ENCODE measurements at regions of chr3 and their contacts with region 1.

Region 1: GRCh38 chr3:56801662-56802377 is at the start of gene ARHGEF3:
- DNase-seq: peak; percentile 73 to 94 (median 89)
- H3K4me3 ChIP-seq: peak within 1 kb of the TSS; percentile 61 to 97 (median 88)
- H3K27ac ChIP-seq: peak within 1 kb of the TSS in 57 of 59 donors; percentile 7 to 97 (median 89)
- H3K27me3 ChIP-seq: no peaks in the 10 kb centered on the region
- CTCF ChIP-seq: peak in 54 of 56 donors; percentile 14 to 71 (median 44)
- total RNA-seq, gene ARHGEF3: 20.5 to 88.5 (median 62.5) TPM

Region 2: DNA sequence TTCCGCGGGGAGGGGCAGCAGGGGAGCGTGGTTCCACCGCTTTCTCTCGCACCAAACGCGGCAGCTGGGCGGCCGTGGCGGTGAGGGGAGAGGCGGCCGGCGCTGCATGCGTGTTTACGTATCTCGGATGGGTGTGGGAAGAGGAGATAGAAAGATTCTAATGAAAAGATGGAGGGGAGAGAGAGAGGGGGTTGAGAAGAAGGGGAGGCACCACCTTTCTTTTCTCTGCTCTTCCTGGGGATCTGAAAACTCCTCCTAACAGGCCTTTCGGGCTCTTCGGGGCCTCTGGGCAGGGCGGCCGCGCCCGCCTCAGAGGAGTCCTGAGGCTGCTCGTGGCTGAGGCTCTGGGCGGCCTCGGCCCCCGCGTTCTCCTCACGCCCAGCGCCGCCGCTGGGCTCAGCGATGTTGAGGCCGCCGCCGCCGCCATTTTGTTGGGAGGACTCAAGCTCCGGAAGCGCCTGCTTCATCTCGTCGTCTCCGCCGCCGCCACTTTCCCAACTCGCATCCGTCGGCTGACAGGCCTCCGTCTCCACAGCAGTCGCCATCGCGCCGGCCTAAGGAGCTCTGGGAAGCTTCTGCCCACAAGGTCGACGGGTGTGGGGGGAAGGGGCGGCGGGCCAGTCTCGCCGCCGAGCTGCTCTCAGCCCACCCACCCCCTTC is 119.2 kb before region 1 on chr3:
- intact Hi-C with region 1: loop called (anchors 5 kb)
- DNase-seq: peak; percentile 41 to 85 (median 70)
- H3K4me3 ChIP-seq: peak overlapping the region; percentile 71 to 97 (median 88)
- H3K27ac ChIP-seq: peak overlapping the region; percentile 76 to 100 (median 98)
- H3K27me3 ChIP-seq: no peaks in the 10 kb centered on the region
- CTCF ChIP-seq: peak in 1 of 56 donors; percentile 2

Region 3: DNA sequence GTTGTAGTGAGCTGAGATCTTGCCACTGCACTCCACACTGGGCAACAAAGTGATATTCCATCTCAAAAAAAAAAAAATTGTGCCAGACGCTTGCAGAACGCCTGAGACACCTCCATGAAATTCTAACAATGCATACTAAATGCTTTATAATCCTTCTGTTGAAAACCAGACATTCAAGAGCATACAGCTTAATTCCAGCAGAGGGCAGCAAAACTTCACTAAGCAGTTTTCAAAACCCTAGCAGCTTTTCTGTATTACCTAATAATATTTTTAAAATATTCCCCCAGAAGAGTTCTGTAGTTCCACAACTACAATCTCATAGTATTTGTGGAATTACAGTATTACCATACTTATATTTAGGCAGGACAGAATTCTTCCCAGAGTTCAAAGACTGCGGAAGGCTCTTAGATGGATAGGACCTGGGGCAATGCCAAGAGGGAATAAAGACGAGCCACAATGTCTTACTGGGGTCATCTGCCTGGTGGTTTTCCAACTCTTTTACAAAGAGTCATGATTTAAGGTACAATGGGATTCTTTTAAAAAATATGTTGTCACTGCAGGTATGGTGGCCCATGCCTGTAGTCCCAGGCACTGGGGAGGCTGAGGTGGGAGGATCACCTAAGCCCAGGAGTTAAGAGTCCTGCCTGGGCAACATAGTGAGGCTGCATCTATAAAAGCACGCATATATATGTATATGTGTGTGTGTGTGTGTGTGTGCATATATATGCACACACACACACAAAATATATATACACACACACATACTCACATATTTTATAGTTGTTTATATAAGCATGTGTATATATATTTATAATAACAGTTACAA is 99.1 kb before region 1 on chr3:
- intact Hi-C with region 1: loop called (anchors 2 to 5 kb)
- DNase-seq: peak in 2 of 10 donors; percentile 52 to 53
- H3K4me3 ChIP-seq: peak overlapping the region in 10 of 59 donors; percentile 7 to 35 (median 27)
- H3K27ac ChIP-seq: no peak overlapping the region
- H3K27me3 ChIP-seq: no peaks in the 10 kb centered on the region
- CTCF ChIP-seq: peak; percentile 76 to 100 (median 94)

Region 4: GRCh38 chr3:56862352-56863074 is 60.7 kb after region 1 on chr3:
- intact Hi-C with region 1: loop called in 1 of 2 experiments (anchors 5 kb)
- DNase-seq: peak in 9 of 10 donors; percentile 30 to 72 (median 64)
- H3K4me3 ChIP-seq: peak overlapping the region in 4 of 59 donors; percentile 19 to 28 (median 24)
- H3K27ac ChIP-seq: peak overlapping the region in 48 of 59 donors; percentile 1 to 82 (median 65)
- H3K27me3 ChIP-seq: no peaks in the 10 kb centered on the region
- CTCF ChIP-seq: peak in 3 of 56 donors; percentile 10 to 25 (median 15)

Region 5: GRCh38 chr3:56988458-56989168 is 186.8 kb after region 1 on chr3:
- intact Hi-C with region 1: loop called (anchors 2 kb)
- DNase-seq: peak; percentile 58 to 89 (median 84)
- H3K4me3 ChIP-seq: peak overlapping the region in 18 of 59 donors; percentile 2 to 38 (median 18)
- H3K27ac ChIP-seq: peak overlapping the region in 42 of 59 donors; percentile 1 to 81 (median 47)
- H3K27me3 ChIP-seq: no peaks in the 10 kb centered on the region
- CTCF ChIP-seq: peak; percentile 86 to 99 (median 95)

Measured in dorsolateral prefrontal cortex (tissue), 120 donors.